Mucosa of descending colon (tissue), 3 donors: ENCODE measurements at regions of chr16 and their contacts with region 1.

Region 1: DNA sequence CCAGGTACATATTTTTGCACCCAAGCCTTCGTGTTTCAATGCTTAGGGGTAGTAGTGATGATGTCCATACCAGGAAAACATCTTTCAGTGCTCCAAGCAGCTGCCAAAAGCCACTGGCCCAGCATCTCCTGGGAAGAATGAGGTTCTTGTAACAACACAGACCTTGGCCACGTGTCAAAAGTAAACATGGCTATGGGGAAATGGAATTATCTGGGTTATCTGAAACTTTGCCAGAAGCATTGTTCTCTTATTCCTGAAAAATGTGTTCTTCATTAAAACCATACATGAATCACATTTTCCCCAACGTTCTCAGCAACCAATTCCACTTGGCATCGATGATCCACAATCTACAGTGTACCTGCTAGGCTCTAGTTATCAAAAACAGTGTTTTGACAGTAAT is 524.2 kb upstream of the EEF2KMT start:
- DNase-seq: no peak
- ATAC-seq: no peak
- H3K4me3 ChIP-seq: no peak overlapping the region
- H3K4me1 ChIP-seq: no peaks in the 10 kb centered on the region
- CTCF ChIP-seq: no peak

Region 2: GRCh38 chr16:5502467-5502869 is 119.4 kb before region 1 on chr16:
- intact Hi-C with region 1: loop called in 1 of 2 experiments (anchors 10 kb)
- DNase-seq: peak in 2 of 3 donors; percentile 34 to 35
- ATAC-seq: peak; percentile 48
- H3K4me3 ChIP-seq: no peak overlapping the region
- H3K4me1 ChIP-seq: no peaks in the 10 kb centered on the region
- CTCF ChIP-seq: no peak

Region 3: GRCh38 chr16:6016530-6017184 is 394.8 kb after region 1 on chr16:
- intact Hi-C with region 1: no loop called
- DNase-seq: peak in 1 of 3 donors; percentile 46
- ATAC-seq: peak; percentile 76
- H3K4me3 ChIP-seq: no peak overlapping the region
- H3K4me1 ChIP-seq: no peaks in the 10 kb centered on the region
- CTCF ChIP-seq: no peak